CD4-positive, alpha-beta T cell (primary cell): ENCODE measurements at regions of chr17 and their contacts with region 1.

Region 1: GRCh38 chr17:65888649-65889048 is 303.3 kb downstream of the CEP112 start:
- DNase-seq: no peak
- ATAC-seq: no peak
- H3K4me3 ChIP-seq: no peak overlapping the region
- H3K4me3 Mint-ChIP-seq: no peak overlapping the region
- H3K27ac ChIP-seq: no peak overlapping the region
- H3K27ac Mint-ChIP-seq: no peak overlapping the region
- H3K4me1 ChIP-seq: no peaks in the 10 kb centered on the region
- H3K4me1 Mint-ChIP-seq: no peaks in the 10 kb centered on the region
- H3K27me3 ChIP-seq: no peaks in the 10 kb centered on the region
- H3K27me3 Mint-ChIP-seq: no peaks in the 10 kb centered on the region
- CTCF ChIP-seq: no peak

Region 2: DNA sequence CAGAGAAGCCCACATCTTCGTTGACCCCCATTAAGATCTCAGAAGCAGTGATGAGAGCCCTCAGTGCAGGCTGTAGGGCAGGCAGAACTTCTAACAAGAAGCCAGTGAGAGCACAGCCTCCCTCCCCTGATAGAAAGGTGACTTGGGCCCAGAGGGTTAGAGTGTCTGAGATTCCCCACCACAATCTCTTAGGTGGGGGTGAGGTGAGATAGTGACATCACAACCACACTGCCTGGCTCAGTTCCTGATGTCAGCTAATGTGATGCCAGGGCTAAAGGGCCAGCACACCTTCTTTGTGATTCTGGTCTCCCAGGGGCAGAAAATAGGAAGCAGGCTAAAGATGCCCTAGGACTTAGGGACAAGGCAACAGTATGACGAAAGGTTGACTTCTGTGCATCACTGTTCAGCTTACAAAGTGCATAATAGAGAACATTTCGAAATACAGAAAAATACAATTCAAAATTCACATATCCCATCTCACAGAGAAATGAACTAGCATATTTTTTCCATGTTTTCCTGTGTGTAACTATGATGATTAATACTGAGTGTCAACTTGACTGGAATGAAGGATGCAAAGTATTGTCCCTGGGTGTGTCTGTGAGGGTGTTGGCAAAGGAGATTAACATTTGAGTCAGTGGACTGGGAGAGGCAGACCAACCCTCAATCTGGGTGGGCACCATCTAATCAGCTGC is 62.2 kb before region 1 on chr17:
- CTCF ChIA-PET with region 1: no interaction called
- POLR2A ChIA-PET with region 1: no interaction called
- intact Hi-C with region 1: no loop called
- DNase-seq: no peak
- ATAC-seq: no peak
- H3K4me3 ChIP-seq: no peak overlapping the region
- H3K4me3 Mint-ChIP-seq: no peak overlapping the region
- H3K27ac ChIP-seq: no peak overlapping the region
- H3K27ac Mint-ChIP-seq: no peak overlapping the region
- H3K4me1 ChIP-seq: no peaks in the 10 kb centered on the region
- H3K4me1 Mint-ChIP-seq: no peaks in the 10 kb centered on the region
- H3K27me3 ChIP-seq: no peaks in the 10 kb centered on the region
- H3K27me3 Mint-ChIP-seq: no peaks in the 10 kb centered on the region
- CTCF ChIP-seq: no peak

Region 3: GRCh38 chr17:65850486-65850885 is 38.2 kb before region 1 on chr17:
- CTCF ChIA-PET with region 1: no interaction called
- POLR2A ChIA-PET with region 1: no interaction called
- intact Hi-C with region 1: no loop called
- DNase-seq: no peak
- ATAC-seq: no peak
- H3K4me3 ChIP-seq: no peak overlapping the region
- H3K4me3 Mint-ChIP-seq: no peak overlapping the region
- H3K27ac ChIP-seq: no peak overlapping the region
- H3K27ac Mint-ChIP-seq: no peak overlapping the region
- H3K4me1 ChIP-seq: no peaks in the 10 kb centered on the region
- H3K4me1 Mint-ChIP-seq: no peaks in the 10 kb centered on the region
- H3K27me3 ChIP-seq: no peaks in the 10 kb centered on the region
- H3K27me3 Mint-ChIP-seq: no peaks in the 10 kb centered on the region
- CTCF ChIP-seq: no peak

Region 4: GRCh38 chr17:65941432-65941831 is 52.8 kb after region 1 on chr17:
- CTCF ChIA-PET with region 1: no interaction called
- POLR2A ChIA-PET with region 1: no interaction called
- intact Hi-C with region 1: loop called in 1 of 2 experiments (anchors 10 kb)
- DNase-seq: no peak
- ATAC-seq: no peak
- H3K4me3 ChIP-seq: no peak overlapping the region
- H3K4me3 Mint-ChIP-seq: no peak overlapping the region
- H3K27ac ChIP-seq: no peak overlapping the region
- H3K27ac Mint-ChIP-seq: no peak overlapping the region
- H3K4me1 ChIP-seq: no peaks in the 10 kb centered on the region
- H3K4me1 Mint-ChIP-seq: no peaks in the 10 kb centered on the region
- H3K27me3 ChIP-seq: no peaks in the 10 kb centered on the region
- H3K27me3 Mint-ChIP-seq: no peaks in the 10 kb centered on the region
- CTCF ChIP-seq: no peak